Esophagus muscularis mucosa (tissue), 4 donors: ENCODE measurements at regions of chr16 and their contacts with region 1.

Region 1: DNA sequence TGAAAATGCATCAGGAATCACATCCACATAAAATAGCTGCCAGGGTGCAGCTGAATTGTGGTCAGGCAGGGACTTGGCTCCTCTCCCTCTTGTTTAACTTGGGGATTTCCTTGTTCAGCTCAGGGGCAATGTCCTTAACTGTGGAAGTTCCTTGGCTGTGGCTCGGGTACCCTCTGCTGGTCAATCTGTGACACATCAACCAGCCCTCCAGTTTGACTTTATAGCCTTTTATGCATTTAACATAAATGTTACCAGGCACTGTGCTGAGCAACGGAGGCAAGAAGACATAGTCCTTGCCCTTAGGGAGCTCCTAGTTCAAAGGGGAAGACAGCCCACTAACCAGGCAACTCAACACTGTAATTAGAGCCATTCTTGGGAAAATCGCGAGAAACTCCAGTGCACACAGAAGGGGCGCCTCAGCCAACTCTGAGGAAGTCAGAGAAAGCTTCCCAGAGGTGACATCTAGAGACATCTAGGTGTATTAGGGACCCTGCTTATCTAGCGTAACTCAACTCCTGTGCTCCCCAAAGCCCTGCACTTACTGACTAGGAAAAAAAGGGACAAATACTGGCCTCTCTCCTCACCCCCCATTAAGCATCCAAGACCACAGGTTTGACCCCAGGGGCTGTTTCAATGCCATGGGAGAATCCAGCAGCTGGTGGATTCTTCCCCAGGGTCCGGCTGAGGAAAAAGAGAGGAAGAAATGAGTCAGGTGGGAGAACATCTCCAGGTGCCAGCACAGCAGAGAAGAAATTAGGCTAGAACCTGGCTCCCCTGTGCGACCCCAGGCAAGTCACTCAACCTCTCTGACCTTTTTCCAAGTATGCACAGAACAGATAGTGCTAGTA is 17.3 kb upstream of the EEF2K start:
- DNase-seq: no peak
- H3K4me3 ChIP-seq: peak overlapping the region in 2 of 4 donors; percentile 79 to 86
- H3K27ac ChIP-seq: peak overlapping the region; percentile 94 to 96 (median 94)
- H3K4me1 ChIP-seq: peaks cover 21 to 41% (median 37%) of the 10 kb centered on the region in 4 donors
- H3K27me3 ChIP-seq: no peaks in the 10 kb centered on the region
- CTCF ChIP-seq: peak; percentile 81 to 92 (median 90)
- EP300 ChIP-seq: no peak
- POLR2A ChIP-seq: no peak

Region 2: GRCh38 chr16:21952793-21953540 is 235.9 kb before region 1 on chr16 and contains the start of gene UQCRC2:
- intact Hi-C with region 1: loop called (anchors 5 kb)
- DNase-seq: peak; percentile 97
- H3K4me3 ChIP-seq: peak within 1 kb of the TSS; percentile 71 to 90 (median 80)
- H3K27ac ChIP-seq: peak within 1 kb of the TSS; percentile 87 to 94 (median 93)
- H3K4me1 ChIP-seq: peaks cover 40 to 62% (median 50%) of the 10 kb centered on the region in 4 donors
- H3K27me3 ChIP-seq: no peaks in the 10 kb centered on the region
- CTCF ChIP-seq: no peak
- EP300 ChIP-seq: no peak
- POLR2A ChIP-seq: peak; percentile 50
- total RNA-seq, gene UQCRC2: 147 to 209 (median 186) TPM

Region 3: DNA sequence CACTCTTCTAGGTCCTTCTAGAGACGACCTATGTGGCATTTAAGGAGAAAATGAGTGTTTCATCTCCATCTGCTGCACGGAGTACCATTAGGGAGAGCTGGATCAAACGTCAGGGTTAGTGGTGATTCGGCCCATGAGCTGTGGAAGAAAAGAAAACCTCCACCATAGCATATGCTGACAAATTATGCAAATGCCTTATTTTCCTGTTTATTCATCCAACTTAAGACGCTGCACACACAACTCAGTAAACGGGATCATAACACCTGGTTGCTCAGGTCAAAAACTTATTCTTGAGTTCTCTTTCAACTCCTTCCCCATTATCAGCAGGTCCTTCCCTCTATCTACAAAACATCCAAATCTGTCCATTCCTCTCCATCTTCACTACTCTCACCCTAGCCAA is 182.2 kb before region 1 on chr16:
- intact Hi-C with region 1: loop called (anchors 1 kb)
- DNase-seq: no peak
- H3K4me3 ChIP-seq: peak overlapping the region in 1 of 4 donors; percentile 97
- H3K27ac ChIP-seq: no peak overlapping the region
- H3K4me1 ChIP-seq: peaks cover 29 to 45% (median 35%) of the 10 kb centered on the region in 4 donors
- H3K27me3 ChIP-seq: no peaks in the 10 kb centered on the region
- CTCF ChIP-seq: no peak
- EP300 ChIP-seq: no peak
- POLR2A ChIP-seq: no peak

Region 4: GRCh38 chr16:22077700-22078313 is 111.0 kb before region 1 on chr16:
- intact Hi-C with region 1: loop called (anchors 5 kb)
- DNase-seq: no peak
- H3K4me3 ChIP-seq: no peak overlapping the region
- H3K27ac ChIP-seq: no peak overlapping the region
- H3K4me1 ChIP-seq: peaks cover 0 to 21% (median 7%) of the 10 kb centered on the region in 4 donors
- H3K27me3 ChIP-seq: no peaks in the 10 kb centered on the region
- CTCF ChIP-seq: peak; percentile 65 to 84 (median 77)
- EP300 ChIP-seq: no peak
- POLR2A ChIP-seq: no peak

Region 5: DNA sequence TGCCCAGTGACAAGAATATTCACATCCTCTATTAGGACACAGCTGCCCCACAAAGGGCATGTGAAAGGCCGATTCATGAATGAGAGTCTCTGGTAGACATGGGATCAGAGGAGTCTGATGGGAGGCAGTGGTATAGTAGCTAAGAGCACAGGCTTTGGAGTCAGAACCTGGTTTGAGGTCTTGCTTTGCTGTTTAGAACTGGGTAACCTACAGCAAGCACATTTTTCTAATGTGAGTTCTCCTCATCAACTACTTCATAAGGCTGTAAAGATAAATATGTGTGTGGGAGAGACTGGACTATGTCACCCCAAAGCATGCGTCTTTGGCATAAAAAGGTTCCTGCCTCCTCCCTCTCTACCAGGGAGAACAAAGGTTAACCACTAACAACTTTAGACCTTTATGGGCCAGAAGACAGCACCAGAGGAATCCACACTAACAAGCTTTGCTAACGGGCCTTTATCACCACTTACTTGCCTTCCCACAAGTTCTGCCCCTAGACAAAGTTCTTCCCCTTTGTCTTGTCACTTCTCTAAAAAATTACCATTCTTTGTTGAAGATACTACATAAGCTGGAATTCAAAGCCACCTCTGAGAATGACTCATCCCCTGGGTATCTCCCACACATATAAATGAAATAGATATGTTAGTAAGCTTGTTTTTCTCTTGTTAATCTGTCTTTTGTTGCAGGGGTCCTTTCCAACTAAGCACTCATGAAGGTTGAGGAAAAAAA is 164.5 kb after region 1 on chr16:
- intact Hi-C with region 1: no loop called
- DNase-seq: no peak
- H3K4me3 ChIP-seq: no peak overlapping the region
- H3K27ac ChIP-seq: peak overlapping the region; percentile 11 to 56 (median 36)
- H3K4me1 ChIP-seq: peaks cover 11 to 35% (median 29%) of the 10 kb centered on the region in 4 donors
- H3K27me3 ChIP-seq: no peaks in the 10 kb centered on the region
- CTCF ChIP-seq: no peak
- EP300 ChIP-seq: no peak
- POLR2A ChIP-seq: no peak

Region 6: GRCh38 chr16:22797551-22797950 is 608.7 kb after region 1 on chr16:
- intact Hi-C with region 1: no loop called
- DNase-seq: no peak
- H3K4me3 ChIP-seq: no peak overlapping the region
- H3K27ac ChIP-seq: no peak overlapping the region
- H3K4me1 ChIP-seq: no peaks in the 10 kb centered on the region
- H3K27me3 ChIP-seq: peaks cover 0 to 4% (median 0%) of the 10 kb centered on the region in 4 donors
- CTCF ChIP-seq: no peak
- EP300 ChIP-seq: no peak
- POLR2A ChIP-seq: no peak